IMR-90 (cell line): ENCODE measurements at regions of chr12 and their contacts with region 1.

Region 1: DNA sequence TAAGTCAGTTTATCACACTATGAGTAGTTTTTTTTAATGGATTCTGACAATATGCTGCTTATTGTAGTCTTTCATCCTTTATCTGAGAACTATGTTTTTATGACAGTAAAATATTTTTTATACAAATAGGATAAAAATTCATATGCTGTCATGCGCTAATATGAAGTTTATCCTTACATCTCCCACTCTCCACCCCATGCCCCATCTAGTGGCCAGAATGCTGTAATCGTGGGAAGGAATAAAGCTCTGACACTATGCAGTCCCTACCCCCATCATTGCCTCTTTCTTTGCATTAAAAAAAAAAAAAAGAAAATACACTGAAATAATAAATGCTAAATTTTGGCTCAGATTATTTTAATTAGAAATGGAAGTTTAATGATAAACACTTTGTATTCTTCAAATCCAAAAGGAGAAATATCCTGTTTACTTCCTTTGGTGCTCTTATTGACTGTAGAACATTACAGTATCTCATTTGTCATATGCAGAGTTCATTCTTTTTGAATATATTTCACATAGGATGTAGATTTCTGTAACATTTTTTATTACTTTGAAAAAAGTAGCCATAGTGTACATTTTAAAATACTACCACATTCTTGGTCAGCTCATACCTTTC is 145.9 kb upstream of the SLCO1C1 start:
- DNase-seq: peak; percentile 56
- ATAC-seq: peak; percentile 89
- H3K4me3 ChIP-seq: no peak overlapping the region
- H3K27ac ChIP-seq: no peak overlapping the region
- H3K4me1 ChIP-seq: no peaks in the 10 kb centered on the region
- H3K27me3 ChIP-seq: no peaks in the 10 kb centered on the region
- CTCF ChIP-seq: peak; percentile 72
- POLR2A ChIP-seq: no peak
- RAD21 ChIP-seq: peak; percentile 62

Region 2: DNA sequence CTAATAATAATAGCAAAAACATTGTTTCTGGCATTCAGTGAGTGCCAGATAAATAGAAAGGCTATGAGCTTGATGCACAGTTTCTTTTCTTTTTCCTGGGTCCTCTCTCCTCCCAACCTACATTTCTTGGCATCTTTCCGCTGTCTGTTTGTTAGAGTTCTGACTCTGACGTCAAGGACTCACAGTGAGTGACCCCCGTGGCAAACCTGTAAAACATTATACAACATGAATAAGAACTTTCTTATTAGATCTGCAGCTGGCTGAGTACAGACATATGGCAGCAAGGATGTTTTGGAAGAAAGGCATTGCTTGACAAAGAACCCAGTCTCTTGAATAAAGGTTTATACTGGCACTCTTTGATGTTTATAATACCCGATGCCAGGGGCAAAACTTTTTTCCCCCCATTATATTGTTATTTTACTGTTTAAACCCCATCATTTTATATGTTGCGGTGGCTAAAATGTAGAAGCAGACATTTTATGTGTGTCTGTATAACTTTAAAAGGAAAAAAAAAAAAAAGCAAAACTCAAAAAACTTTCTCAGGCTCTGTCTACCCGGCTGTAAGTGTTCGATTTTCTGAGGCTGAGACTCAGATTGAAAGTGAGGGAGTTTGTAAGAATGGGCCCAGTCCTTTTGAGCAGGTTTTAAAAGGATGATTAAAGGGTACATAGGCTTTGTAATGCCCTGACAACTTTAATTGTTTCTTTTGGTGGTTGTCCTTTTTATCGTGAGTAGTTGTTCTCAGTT is 21.6 kb before region 1 on chr12:
- CTCF ChIA-PET with region 1: interaction called, 4 read pairs
- POLR2A ChIA-PET with region 1: no interaction called
- dilution Hi-C with region 1: no loop called
- in situ Hi-C with region 1: no loop called
- intact Hi-C with region 1: loop called (anchors 1 kb)
- DNase-seq: peak; percentile 90
- ATAC-seq: peak; percentile 64
- H3K4me3 ChIP-seq: no peak overlapping the region
- H3K27ac ChIP-seq: peak overlapping the region; percentile 81; the same call in 1 of the 2 replicates
- H3K4me1 ChIP-seq: peaks cover 12% of the 10 kb centered on the region
- H3K27me3 ChIP-seq: no peaks in the 10 kb centered on the region
- CTCF ChIP-seq: no peak
- POLR2A ChIP-seq: no peak
- RAD21 ChIP-seq: no peak

Region 3: DNA sequence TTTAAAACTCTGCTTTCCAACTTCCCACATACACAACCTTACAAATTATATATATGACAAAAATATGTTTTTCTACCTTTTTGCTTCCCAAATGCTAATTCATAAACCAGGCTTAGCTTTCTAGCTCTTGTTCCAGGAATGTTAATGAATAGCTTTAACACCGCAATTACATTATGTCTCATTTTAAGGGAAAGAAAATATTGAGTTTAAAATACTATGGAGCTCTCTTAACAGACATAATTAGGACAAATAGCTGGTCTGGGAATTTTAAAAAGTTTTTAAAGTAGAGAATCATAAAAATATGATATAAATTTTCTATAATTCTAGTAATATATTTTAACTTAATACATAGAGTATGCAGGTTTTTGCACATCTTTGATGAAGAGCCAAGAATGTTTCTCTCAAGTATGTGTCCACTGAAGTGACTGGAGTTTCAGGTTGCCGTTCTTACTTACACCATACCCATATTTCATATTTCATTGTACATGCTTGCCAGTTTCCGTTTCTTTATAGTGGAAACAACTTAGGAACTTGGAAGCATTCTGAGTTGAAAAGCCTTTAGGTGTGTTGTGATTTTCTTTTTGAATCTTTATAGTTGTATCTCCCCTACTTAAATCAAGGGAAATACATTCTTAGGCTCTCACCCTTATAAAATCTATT is 55.3 kb after region 1 on chr12:
- CTCF ChIA-PET with region 1: no interaction called
- POLR2A ChIA-PET with region 1: no interaction called
- dilution Hi-C with region 1: no loop called
- in situ Hi-C with region 1: no loop called
- intact Hi-C with region 1: no loop called
- DNase-seq: no peak
- ATAC-seq: no peak
- H3K4me3 ChIP-seq: no peak overlapping the region
- H3K27ac ChIP-seq: no peak overlapping the region
- H3K4me1 ChIP-seq: no peaks in the 10 kb centered on the region; the same call in 1 of the 2 replicates
- H3K27me3 ChIP-seq: no peaks in the 10 kb centered on the region
- CTCF ChIP-seq: no peak
- POLR2A ChIP-seq: no peak
- RAD21 ChIP-seq: no peak